ENCODE measurements at regions of chr4 and their contacts with region 1.

Region 1: DNA sequence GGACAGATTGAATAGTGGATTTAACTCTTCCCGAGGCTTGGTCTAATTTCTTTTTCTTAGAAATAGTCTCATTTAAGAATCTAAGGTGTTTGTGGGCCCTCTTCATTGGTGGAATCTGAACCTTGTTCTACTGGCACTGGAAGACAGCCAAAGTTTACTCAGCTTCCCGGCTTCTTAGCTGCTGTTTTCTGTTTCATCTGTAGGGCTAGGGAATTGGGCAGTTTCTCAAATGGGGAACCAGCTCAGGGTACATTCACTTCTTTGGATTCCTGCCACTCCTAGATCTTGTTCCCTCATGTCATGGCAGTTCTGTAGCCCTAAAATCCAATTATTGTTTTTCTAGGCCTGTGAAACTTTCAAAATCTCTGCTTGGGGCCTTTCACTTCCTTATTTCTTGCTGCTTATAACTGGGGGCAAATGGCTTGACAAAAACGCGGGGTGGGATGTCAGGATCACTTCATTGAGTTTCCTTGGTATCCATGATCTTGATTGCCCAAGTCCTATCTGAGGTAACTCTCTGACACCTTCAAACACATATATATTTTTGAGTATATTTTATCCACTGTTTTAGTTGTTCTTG is 985.0 kb downstream of the C4orf33 start:
- DNase-seq: no peak

Region 2: GRCh38 chr4:128600996-128601871 is 1479.7 kb before region 1 on chr4:
- intact Hi-C with region 1: loop called in 1 of 2 experiments (anchors 10 kb)
- DNase-seq: no peak